Endothelial cell of umbilical vein (primary cell): ENCODE measurements at regions of chr16 and their contacts with region 1.

Region 1: DNA sequence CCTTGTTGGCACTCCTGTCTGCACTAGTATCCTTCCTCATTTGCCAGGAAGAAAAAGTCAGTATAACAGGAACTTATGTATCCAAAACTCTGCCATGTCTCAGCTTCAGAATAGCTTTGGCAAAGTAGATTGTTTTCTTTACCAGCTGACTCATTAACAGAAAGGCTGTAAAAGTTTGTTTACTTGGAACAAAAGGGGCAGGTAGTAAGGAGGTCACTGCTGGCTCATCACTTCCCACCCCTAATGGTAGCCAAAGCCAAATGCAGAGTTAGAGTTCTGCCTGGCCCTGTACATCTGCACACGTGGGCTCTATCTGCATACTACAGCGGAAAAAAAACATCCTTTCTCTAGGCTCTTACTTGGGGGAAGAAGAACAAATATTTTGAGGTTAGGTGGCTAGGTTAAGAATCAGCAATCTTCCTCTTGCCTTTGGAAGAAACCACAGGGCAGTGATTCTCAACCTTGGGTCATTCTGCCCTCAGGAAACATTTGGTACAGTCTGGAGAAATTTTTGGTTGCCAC is 90.9 kb downstream of the CFDP1 start:
- DNase-seq: peak; percentile 99
- H3K4me3 ChIP-seq: no peak overlapping the region
- H3K27ac ChIP-seq: peak overlapping the region; percentile 100
- H3K4me1 ChIP-seq: peaks cover 58% of the 10 kb centered on the region
- H3K27me3 ChIP-seq: no peaks in the 10 kb centered on the region
- CTCF ChIP-seq: no peak
- POLR2A ChIP-seq: peak; percentile 55

Region 2: GRCh38 chr16:75238132-75238852 is 104.1 kb before region 1 on chr16:
- CTCF ChIA-PET with region 1: interaction called, 10 read pairs
- POLR2A ChIA-PET with region 1: no interaction called
- dilution Hi-C with region 1: no loop called
- intact Hi-C with region 1: no loop called
- DNase-seq: no peak
- H3K4me3 ChIP-seq: no peak overlapping the region
- H3K27ac ChIP-seq: peak overlapping the region; percentile 48
- H3K4me1 ChIP-seq: peaks cover 10% of the 10 kb centered on the region
- H3K27me3 ChIP-seq: no peaks in the 10 kb centered on the region
- CTCF ChIP-seq: no peak
- POLR2A ChIP-seq: no peak

Region 3: DNA sequence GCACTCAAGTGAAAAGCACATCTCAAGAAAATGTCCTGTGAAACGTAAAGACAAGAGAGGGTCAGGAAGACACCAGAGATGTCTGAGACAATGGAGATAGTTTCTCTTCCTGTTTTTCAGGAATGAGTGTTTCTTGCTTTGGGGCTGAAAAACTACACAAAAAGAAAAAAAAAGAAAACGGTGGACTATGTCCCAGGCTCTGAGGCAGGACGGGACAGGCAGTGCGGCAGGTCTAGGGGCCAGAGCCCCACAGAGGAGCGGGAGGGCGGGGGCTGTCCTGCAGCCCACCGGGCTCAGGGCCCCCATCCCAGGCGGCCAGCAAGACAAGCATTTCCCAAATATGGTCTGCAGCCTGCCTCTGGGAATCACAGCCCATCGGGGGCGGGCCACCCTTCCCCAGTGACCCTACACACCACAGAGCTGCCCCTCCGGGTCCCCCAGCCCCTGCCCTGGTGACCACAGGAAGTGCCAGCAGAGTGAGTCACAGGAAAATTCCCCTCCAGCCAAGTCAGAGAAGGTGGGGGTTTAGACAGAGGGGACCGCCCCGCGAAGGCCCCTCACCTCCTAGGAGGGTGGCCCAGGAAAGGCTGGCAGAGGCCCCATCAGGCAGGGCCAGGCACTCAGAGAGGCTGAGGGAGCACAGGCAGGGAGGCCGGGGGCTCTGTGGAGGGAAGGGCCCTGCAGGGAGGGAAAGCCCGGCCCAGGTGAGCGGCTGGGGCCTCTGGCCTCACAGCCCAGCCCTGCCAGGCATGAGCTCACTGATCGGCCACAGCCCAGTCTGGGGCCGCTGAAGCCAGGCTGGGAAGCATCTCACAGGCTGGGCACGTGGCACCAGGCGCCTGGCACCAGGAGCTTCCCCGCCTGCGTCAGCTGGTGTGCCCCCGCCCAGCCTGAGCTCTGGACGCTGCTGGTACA is 97.3 kb before region 1 on chr16:
- CTCF ChIA-PET with region 1: interaction called, 48 read pairs
- POLR2A ChIA-PET with region 1: interaction called, 14 read pairs
- dilution Hi-C with region 1: no loop called
- intact Hi-C with region 1: loop called (anchors 1 kb)
- DNase-seq: peak; percentile 94
- H3K4me3 ChIP-seq: peak overlapping the region in 1 of 3 experiments; percentile 5
- H3K27ac ChIP-seq: peak overlapping the region; percentile 92
- H3K4me1 ChIP-seq: peaks cover 66% of the 10 kb centered on the region
- H3K27me3 ChIP-seq: no peaks in the 10 kb centered on the region
- CTCF ChIP-seq: no peak
- POLR2A ChIP-seq: peak; percentile 74

Region 4: DNA sequence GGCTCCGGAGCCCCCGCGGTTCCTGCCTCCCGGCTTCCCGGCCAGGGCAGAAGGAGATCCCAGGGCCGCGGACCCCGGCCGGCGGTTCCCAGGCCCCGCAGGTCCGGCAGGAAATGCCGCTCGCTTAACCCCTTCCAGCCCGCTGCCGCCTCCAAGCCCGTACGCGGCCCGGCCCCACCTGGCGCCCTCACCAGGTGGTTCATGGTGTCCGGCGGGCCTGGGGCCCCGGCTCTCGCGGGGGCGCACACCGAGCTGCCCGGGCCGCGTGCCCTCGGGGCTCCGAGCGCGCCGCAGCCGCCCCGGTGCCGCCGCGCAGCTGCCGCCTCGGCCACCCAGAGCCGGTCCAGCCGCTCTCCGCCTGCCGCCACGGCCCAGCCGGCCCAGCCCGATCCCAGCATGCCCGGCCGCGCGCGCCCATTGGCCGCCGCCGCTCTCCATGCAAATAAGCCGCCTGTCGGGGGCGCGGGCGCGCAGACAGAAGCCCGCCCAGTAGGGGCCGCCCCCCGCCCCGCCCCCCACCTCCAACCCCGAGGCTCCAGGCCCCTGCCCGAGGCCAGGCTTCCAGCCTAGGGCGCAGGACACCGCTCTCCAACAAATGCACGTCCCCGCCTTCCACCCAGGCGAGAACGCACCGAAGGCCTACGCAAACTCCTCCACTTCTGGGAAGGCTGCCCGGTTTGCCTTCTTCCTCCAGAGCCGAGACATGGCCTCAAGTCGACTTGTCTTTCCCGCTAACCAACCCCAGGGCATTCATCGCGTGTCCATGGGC is 90.9 kb before region 1 on chr16 and contains the start of gene BCAR1:
- CTCF ChIA-PET with region 1: interaction called, 48 read pairs
- POLR2A ChIA-PET with region 1: interaction called, 14 read pairs
- dilution Hi-C with region 1: no loop called
- intact Hi-C with region 1: loop called (anchors 1 kb)
- DNase-seq: peak; percentile 89
- H3K4me3 ChIP-seq: peak within 1 kb of the TSS; percentile 50 to 83 (median 80)
- H3K27ac ChIP-seq: peak within 1 kb of the TSS; percentile 92
- H3K4me1 ChIP-seq: peaks cover 80% of the 10 kb centered on the region
- H3K27me3 ChIP-seq: no peaks in the 10 kb centered on the region
- CTCF ChIP-seq: no peak
- POLR2A ChIP-seq: peak; percentile 73
- total RNA-seq, gene BCAR1: 237 and 267 TPM in 2 replicates

Region 5: GRCh38 chr16:75288596-75289120 is 53.7 kb before region 1 on chr16:
- CTCF ChIA-PET with region 1: no interaction called
- POLR2A ChIA-PET with region 1: no interaction called
- dilution Hi-C with region 1: no loop called
- intact Hi-C with region 1: loop called (anchors 1 kb)
- DNase-seq: no peak
- H3K4me3 ChIP-seq: no peak overlapping the region
- H3K27ac ChIP-seq: peak overlapping the region; percentile 72
- H3K4me1 ChIP-seq: peaks cover 27% of the 10 kb centered on the region
- H3K27me3 ChIP-seq: no peaks in the 10 kb centered on the region
- CTCF ChIP-seq: no peak
- POLR2A ChIP-seq: no peak

Region 6: GRCh38 chr16:75319513-75320411 is 22.6 kb before region 1 on chr16:
- CTCF ChIA-PET with region 1: interaction called, 3 read pairs
- POLR2A ChIA-PET with region 1: interaction called, 4 read pairs
- dilution Hi-C with region 1: no loop called
- intact Hi-C with region 1: loop called (anchors 1 kb)
- DNase-seq: peak; percentile 52
- H3K4me3 ChIP-seq: no peak overlapping the region
- H3K27ac ChIP-seq: peak overlapping the region; percentile 45
- H3K4me1 ChIP-seq: peaks cover 30% of the 10 kb centered on the region
- H3K27me3 ChIP-seq: no peaks in the 10 kb centered on the region
- CTCF ChIP-seq: no peak
- POLR2A ChIP-seq: no peak

Region 7: DNA sequence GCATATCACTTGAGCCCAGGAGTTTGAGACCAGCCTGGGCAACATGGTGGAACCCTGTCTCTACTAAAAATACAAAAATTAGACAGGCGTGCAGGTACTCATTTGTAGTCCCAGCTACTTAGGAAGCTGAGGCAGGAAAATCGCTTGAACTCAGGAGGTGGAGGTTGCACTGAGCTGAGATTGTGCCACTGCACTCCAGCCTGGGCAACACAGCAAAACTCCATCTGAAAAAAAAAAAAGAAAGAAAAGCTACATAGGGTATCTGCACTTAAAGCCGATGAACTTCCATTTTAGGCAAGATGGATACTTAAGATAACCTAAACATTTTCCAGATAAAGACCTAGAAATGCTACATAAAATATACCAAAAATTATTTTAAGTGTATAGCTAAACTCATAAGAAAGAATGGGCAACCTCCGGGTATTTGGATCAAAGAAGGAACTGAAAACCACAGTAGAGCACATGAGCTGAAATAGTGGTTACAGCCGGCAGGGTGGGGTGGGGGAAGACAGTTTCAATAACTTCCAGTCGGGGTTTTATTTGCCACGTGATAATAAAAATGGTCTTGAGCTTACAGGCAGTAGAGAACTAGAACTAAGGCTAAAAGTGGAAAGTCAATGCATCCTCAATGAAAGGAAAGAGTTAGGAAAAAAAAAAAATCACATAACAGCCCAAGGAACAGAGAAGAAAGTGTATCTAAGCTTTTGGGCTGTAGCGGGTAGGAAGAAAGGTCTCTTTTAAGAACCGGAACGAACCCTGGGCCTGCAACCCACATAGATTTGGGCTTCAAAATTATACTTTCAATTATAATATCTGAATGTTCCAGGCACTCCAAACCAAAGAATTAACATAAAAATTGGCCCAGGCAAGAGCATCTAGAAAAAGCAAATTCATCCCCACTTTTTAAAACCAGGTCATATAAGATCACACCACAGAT is 37.8 kb after region 1 on chr16:
- CTCF ChIA-PET with region 1: interaction called, 31 read pairs
- POLR2A ChIA-PET with region 1: interaction called, 7 read pairs
- dilution Hi-C with region 1: no loop called
- intact Hi-C with region 1: loop called (anchors 1 kb)
- DNase-seq: peak; percentile 17
- H3K4me3 ChIP-seq: no peak overlapping the region
- H3K27ac ChIP-seq: peak overlapping the region; percentile 59
- H3K4me1 ChIP-seq: peaks cover 55% of the 10 kb centered on the region
- H3K27me3 ChIP-seq: no peaks in the 10 kb centered on the region
- CTCF ChIP-seq: no peak
- POLR2A ChIP-seq: no peak